A549 (cell line): ENCODE measurements at regions of chr11 and their contacts with region 1.

Region 1: DNA sequence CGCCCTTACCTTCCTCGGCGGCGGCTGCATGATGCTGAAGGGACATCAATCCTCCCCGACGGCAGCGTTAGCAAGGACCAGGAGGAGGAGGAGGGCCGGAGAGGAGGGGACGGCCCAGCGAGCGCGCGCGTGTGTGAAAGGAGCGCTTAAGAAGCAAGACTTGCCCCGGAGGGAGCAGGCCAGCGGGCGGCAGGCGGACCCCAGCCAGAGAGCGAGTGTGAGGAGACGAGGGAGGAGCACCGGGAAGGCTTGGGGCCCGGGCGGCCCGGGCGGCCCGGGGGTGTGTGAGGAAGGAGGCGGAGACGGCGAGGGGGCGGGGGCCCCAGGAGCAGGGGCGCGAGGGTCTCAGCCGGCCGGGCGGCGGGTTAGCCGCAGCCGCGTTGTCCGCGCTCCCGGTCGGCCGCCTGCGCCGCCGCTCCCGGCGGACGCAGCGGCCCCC is 251 bp downstream of the FCHSD2 start:
- DNase-seq: peak; percentile 56 to 73
- ATAC-seq: peak; percentile 65 to 70
- H3K4me3 ChIP-seq: peak overlapping the region; percentile 97
- H3K27ac ChIP-seq: peak overlapping the region; percentile 92 to 96
- H3K4me1 ChIP-seq: peaks cover 16% of the 10 kb centered on the region
- CTCF ChIP-seq: no peak
- EP300 ChIP-seq: no peak
- POLR2A ChIP-seq: peak; percentile 52; the same call in 1 of the 2 replicates
- RAD21 ChIP-seq: no peak

Region 2: DNA sequence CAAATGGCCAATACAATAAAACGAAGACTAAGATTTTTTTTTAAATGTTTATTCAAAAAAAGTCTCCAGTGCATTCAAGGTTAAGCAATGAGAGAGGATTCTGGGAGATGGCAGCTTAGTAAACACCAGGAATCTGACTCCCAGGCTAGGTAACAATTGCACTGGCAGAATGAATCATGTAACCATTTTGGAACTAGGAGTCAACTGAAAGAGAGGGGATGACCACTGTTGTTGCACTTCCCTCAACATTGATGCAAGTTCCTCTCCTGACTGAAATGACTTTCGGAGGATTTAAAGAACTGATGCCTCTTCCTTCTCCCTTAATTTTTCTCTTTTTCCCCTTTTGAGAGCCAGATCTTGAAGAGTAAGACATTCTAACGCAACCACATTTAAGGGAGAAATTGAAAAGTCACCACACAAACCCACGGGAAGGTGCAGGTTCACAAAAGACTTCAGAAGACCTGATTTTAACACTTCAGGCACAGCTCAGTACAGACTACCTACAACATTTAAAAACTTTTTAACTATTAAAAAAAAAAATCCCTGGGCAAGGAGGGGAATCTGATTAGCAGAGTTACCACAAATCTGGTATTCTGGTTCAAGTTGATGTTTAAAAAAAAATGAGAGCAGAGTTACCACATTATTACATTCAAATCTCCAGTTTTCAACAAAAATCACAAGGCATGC is 56.5 kb before region 1 on chr11:
- CTCF ChIA-PET with region 1: no interaction called
- POLR2A ChIA-PET with region 1: no interaction called
- DNase-seq: peak in 1 of 2 experiments; percentile 59
- ATAC-seq: 0 out of 6 replicates have a peak, but pooled peaks of 1 of the 2 experiments have one; percentile 35
- H3K4me3 ChIP-seq: no peak overlapping the region
- H3K27ac ChIP-seq: no peak overlapping the region; a peak in 1 of 6 replicates
- H3K4me1 ChIP-seq: peaks cover 7% of the 10 kb centered on the region
- CTCF ChIP-seq: no peak
- EP300 ChIP-seq: no peak
- POLR2A ChIP-seq: no peak
- RAD21 ChIP-seq: no peak

Region 3: GRCh38 chr11:73126804-73127480 is 14.9 kb before region 1 on chr11:
- CTCF ChIA-PET with region 1: interaction called, 11 read pairs
- POLR2A ChIA-PET with region 1: no interaction called
- DNase-seq: no peak
- ATAC-seq: no peak
- H3K4me3 ChIP-seq: no peak overlapping the region
- H3K27ac ChIP-seq: no peak overlapping the region
- H3K4me1 ChIP-seq: no peaks in the 10 kb centered on the region
- CTCF ChIP-seq: no peak
- EP300 ChIP-seq: no peak
- POLR2A ChIP-seq: no peak
- RAD21 ChIP-seq: no peak

Region 4: DNA sequence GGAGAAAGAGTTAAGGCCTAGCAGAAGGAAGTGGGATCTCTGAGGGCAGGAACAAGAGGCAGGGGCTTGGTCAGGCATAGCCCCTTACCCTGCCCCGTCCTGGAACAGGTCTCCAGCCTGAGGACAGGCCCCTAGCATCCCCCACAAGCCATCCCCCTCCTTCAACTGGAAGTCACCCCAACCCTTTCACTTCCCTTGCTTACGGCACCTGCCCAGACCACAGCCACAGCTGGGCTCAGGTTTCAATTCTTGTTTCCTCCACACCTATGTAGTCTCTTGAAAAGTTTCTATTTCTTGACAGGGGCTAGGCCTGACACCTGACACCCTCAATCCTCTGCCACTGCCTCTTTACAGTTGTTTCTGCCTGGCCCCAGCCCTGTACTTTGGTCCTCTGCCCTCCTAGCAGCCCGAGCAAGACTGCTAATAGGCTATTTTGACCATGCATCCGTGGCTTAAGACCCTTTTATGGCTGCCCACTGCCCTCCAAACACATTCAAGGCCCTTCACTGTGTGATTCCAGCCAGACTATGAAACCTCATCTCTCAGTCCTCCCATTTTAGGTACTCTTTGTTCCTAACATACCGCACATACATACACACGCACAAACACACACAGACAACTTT is 11.1 kb after region 1 on chr11:
- CTCF ChIA-PET with region 1: interaction called, 10 read pairs
- POLR2A ChIA-PET with region 1: interaction called, 3 read pairs
- DNase-seq: no peak
- ATAC-seq: no peak
- H3K4me3 ChIP-seq: no peak overlapping the region
- H3K27ac ChIP-seq: no peak overlapping the region
- H3K4me1 ChIP-seq: no peaks in the 10 kb centered on the region
- CTCF ChIP-seq: no peak
- EP300 ChIP-seq: no peak
- POLR2A ChIP-seq: no peak
- RAD21 ChIP-seq: no peak

Region 5: GRCh38 chr11:73164803-73165540 is 23.1 kb after region 1 on chr11:
- CTCF ChIA-PET with region 1: interaction called, 11 read pairs
- POLR2A ChIA-PET with region 1: interaction called, 4 read pairs
- DNase-seq: no peak
- ATAC-seq: no peak
- H3K4me3 ChIP-seq: no peak overlapping the region
- H3K27ac ChIP-seq: no peak overlapping the region
- H3K4me1 ChIP-seq: no peaks in the 10 kb centered on the region
- CTCF ChIP-seq: no peak
- EP300 ChIP-seq: no peak
- POLR2A ChIP-seq: no peak
- RAD21 ChIP-seq: no peak